Ascending aorta (tissue), 2 donors: ENCODE measurements at regions of chr12 and their contacts with region 1.

Region 1: GRCh38 chr12:91178139-91178561 is 4.5 kb downstream of the DCN start:
- DNase-seq: no peak
- H3K4me3 ChIP-seq: peak overlapping the region; percentile 46 to 48
- H3K27ac ChIP-seq: no peak overlapping the region
- H3K4me1 ChIP-seq: no peaks in the 10 kb centered on the region
- H3K27me3 ChIP-seq: no peaks in the 10 kb centered on the region
- CTCF ChIP-seq: peak in 2 of 3 experiments; percentile 39 to 60

Region 2: DNA sequence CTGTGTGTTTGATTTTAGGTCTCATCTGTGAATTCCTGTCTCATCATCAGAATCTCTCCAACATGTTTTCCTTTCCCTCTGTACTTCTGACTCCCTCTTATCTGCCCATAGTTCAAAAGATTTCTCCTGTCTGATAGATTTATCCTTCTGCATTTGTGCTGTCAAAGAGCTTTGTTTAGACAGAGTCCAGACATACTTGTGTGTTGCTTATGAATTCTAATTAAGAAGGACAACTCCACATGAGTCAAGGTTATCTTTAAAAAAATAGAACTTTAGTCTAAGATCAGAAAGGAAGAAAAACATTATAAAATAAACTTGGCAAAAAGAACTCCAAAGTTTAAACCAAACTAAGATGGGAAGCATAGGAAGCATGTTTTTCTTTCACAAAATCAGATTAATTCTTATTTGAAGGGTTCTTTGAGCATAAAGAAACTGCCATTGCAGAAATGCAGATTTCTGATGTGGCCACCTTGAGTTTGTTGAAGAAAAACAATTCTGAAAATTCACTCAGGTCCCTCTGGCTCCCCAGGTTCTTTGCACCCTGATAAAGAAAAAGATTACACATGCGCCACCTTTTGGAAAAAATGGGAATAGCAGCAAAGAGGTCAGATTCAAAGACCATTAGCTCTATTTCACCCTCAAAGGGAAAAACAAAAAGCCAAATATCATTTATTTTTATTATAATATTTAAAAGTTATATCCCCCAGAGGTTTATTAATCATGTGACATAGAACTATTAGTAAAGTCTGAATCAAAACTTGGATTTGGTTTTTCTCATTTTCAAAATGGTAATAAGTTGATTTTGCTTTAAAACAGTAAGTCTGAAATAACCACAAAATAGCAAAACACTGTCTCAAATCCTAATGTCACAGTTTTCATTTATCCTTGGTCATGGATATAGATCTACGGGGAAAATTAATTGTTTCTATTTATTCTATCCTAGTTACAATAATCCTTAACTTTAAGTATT is 148.2 kb after region 1 on chr12:
- intact Hi-C with region 1: loop called (anchors 1 kb)
- DNase-seq: peak in 1 of 2 donors; percentile 63
- H3K4me3 ChIP-seq: peak overlapping the region in 1 of 2 donors; percentile 26
- H3K27ac ChIP-seq: peak overlapping the region; percentile 8 to 19
- H3K4me1 ChIP-seq: peaks cover 0 to 3% of the 10 kb centered on the region in 2 donors
- H3K27me3 ChIP-seq: no peaks in the 10 kb centered on the region
- CTCF ChIP-seq: peak; percentile 34 to 80 (median 70)

Region 3: DNA sequence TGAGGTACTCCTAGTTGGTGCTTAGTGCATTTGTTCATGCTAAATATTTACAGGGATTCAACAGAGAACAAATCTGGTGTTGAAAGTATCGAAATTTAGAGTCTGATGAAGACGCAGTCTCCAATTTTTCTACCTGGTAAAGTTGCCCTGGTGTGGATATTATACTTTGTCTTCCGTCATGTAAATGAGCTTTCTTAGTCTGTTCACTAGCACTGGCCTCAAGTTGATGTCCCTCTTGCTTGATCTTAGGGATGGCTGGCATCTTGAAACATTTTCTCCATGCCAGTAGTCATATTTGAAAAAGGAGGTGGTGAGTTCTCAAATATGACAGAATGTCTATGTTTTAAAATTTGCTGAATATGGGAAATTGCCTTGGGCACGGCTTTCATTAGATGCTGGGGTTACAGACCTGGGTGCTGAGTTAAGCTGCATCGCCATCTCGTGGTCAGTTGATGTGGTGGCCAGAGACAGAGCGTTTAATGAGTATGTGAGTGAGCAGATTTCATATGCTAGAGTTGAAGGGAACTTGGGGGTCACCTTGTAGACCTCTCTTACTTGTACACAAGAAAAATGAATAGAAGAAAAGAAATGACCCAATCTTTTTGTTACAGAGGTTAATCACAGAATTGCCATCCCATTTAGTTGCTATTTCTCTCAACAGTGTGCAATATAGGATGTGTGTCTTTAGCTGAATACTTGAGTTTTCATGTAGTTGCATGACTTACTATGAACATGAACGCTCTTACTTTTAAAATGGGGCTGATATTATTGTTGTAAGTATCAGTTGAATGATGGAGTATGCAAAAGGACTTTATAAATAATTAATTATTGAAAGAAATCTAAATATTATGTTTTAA is 177.2 kb after region 1 on chr12:
- intact Hi-C with region 1: loop called (anchors 1 kb)
- DNase-seq: peak in 1 of 2 donors; percentile 84
- H3K4me3 ChIP-seq: no peak overlapping the region
- H3K27ac ChIP-seq: no peak overlapping the region
- H3K4me1 ChIP-seq: no peaks in the 10 kb centered on the region
- H3K27me3 ChIP-seq: no peaks in the 10 kb centered on the region
- CTCF ChIP-seq: peak; percentile 60 to 86 (median 80)